ENCODE measurements at regions of chr14 and their contacts with region 1.

Region 1: DNA sequence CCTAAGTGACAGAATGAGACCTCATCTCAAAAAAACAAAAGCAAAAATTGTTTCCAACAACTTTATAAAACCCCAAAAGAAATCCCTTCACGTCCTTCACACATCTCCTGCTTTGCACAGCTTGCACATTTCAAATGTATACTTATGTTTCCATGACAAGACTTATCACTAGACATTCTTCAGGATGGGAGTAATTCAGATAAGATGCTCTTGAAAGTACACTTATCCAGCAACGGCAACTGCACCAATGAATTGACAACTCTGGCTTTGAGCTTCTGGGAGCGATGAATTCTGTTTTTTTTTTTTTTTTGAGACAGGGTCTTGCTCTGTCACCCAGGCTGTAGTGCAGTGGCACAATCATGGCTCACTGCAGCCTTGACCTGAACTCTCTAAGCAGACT is 30.8 kb upstream of the AKAP5 start:
- DNase-seq: no peak
- ATAC-seq: no peak
- H3K4me3 Mint-ChIP-seq: no peak overlapping the region
- H3K27ac Mint-ChIP-seq: peak overlapping the region; percentile 82; the same call in 1 of the 2 replicates
- H3K4me1 Mint-ChIP-seq: no peaks in the 10 kb centered on the region
- H3K27me3 Mint-ChIP-seq: no peaks in the 10 kb centered on the region
- CTCF ChIP-seq: no peak

Region 2: DNA sequence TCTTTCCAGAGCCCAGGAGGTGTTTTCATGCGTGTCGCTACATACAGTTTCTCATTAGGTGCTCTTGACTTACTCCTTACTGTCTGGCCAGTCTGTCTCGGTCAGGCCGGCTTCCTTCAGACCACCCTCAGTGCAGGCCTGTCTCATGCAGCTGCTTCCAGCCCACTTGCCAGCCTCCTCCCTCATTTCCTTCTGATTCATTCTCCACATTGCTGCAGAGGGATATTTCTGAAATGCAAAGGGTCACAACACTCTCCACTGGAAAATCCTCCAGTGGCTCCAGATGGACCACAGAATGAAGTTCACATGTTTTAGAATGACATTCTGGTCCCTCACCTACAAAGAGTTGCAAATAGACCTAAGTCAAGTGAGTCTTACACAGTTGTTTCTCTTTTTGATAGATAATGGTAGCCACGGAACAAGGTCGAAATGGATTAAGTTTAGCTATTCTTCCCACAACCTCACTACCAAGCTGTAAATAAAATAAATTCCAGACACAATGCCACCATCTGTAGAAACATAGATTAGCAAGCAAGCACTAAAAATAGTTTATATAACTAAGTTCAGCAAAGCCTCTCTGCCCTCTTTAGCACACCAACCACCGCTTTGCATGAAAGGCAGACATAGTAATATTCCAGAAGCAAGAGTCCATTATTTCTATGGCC is 287.3 kb before region 1 on chr14:
- CTCF ChIA-PET with region 1: no interaction called
- POLR2A ChIA-PET with region 1: no interaction called
- DNase-seq: no peak
- ATAC-seq: no peak
- H3K4me3 Mint-ChIP-seq: no peak overlapping the region
- H3K27ac Mint-ChIP-seq: peak overlapping the region; percentile 61
- H3K4me1 Mint-ChIP-seq: 0 out of 2 replicates have a peak, but pooled peaks cover 3% of the 10 kb centered on the region
- H3K27me3 Mint-ChIP-seq: no peaks in the 10 kb centered on the region
- CTCF ChIP-seq: no peak

Region 3: GRCh38 chr14:64369201-64369600 is 65.3 kb before region 1 on chr14:
- CTCF ChIA-PET with region 1: interaction called, 10 read pairs
- POLR2A ChIA-PET with region 1: no interaction called
- DNase-seq: no peak
- ATAC-seq: no peak
- H3K4me3 Mint-ChIP-seq: no peak overlapping the region
- H3K27ac Mint-ChIP-seq: no peak overlapping the region
- H3K4me1 Mint-ChIP-seq: no peaks in the 10 kb centered on the region
- H3K27me3 Mint-ChIP-seq: no peaks in the 10 kb centered on the region
- CTCF ChIP-seq: no peak

Region 4: DNA sequence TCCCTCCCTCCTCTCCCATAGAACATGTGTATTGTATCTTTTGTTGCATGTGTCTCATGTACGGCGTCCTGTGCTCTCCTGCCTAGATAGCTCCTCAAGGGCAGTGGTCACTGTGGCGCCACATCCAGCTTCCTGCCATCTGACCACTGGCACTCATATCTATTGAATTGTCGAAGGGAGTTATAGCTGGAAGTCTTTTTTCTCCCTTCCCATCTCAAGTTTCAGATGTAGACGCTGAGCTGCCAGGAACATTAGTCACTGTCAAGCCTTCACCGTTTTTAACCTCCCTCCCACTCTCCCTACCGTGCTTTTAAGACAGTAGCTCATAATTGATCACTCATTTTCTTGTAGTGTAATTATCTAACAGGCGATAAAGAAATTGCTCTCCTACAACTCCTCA is 13.4 kb before region 1 on chr14:
- CTCF ChIA-PET with region 1: interaction called, 17 read pairs
- POLR2A ChIA-PET with region 1: no interaction called
- DNase-seq: no peak
- ATAC-seq: no peak
- H3K4me3 Mint-ChIP-seq: no peak overlapping the region
- H3K27ac Mint-ChIP-seq: no peak overlapping the region
- H3K4me1 Mint-ChIP-seq: no peaks in the 10 kb centered on the region
- H3K27me3 Mint-ChIP-seq: no peaks in the 10 kb centered on the region
- CTCF ChIP-seq: no peak